Activated T-helper 2 cell treated with anti-CD3 and anti-CD28 coated beads, Interferon-gamma antibody, Interleukin-2, Interleukin-4, amounts not matched to agents 10 μg/mL and 5 μg/mL and 100 μg/mL, durations not matched to agents 14 hours and 24 hours and 36 hours (primary cell): ENCODE measurements at regions of chr18 and their contacts with region 1.

Region 1: GRCh38 chr18:7066965-7067555 is 50.5 kb downstream of the LAMA1 start:
- DNase-seq: no peak
- H3K4me3 Mint-ChIP-seq: no peak overlapping the region
- H3K27ac Mint-ChIP-seq: no peak overlapping the region
- H3K4me1 Mint-ChIP-seq: no peaks in the 10 kb centered on the region
- H3K27me3 Mint-ChIP-seq: no peaks in the 10 kb centered on the region

Region 2: DNA sequence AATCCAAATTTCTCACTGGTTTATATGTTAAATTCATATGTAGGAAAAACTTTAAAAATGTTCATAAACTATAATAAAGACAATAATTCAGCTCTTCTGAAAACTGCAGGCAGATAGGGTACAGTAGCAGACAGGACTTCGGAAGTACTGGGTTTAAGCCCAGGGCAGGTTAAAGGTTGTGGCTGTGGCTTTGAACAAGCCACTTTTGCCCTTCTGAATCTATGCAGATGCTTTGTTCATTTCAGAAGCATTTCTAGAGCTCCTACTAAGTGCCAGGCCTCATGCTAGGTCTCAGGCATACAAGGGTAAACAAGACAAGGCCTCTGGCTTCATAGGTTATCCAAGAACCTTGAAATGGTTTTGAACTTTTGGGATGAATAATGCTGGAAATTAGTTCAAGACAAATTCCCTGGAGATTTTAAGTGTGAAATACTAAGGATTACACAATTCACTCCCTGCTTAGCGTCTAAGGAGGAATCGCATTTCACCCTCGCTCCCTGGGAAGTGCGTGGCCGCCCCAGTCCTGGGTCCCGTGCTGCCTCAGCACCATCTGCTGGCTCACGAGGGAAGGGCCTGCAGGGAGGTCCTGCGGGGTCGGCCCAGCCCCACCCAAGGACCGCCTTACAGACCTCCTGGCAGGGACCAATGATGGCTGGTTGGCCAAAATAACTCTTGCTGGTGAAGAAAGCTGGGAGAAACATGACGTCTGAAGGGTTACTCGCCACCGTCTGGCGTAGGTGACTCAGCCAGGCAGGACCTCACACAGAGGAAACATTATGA is 584.7 kb before region 1 on chr18:
- intact Hi-C with region 1: loop called (anchors 5 kb)
- DNase-seq: no peak
- H3K4me3 Mint-ChIP-seq: no peak overlapping the region
- H3K27ac Mint-ChIP-seq: no peak overlapping the region
- H3K4me1 Mint-ChIP-seq: no peaks in the 10 kb centered on the region
- H3K27me3 Mint-ChIP-seq: no peaks in the 10 kb centered on the region

Region 3: GRCh38 chr18:7358989-7359726 is 292.1 kb after region 1 on chr18:
- intact Hi-C with region 1: no loop called
- DNase-seq: no peak
- H3K4me3 Mint-ChIP-seq: no peak overlapping the region
- H3K27ac Mint-ChIP-seq: no peak overlapping the region
- H3K4me1 Mint-ChIP-seq: no peaks in the 10 kb centered on the region
- H3K27me3 Mint-ChIP-seq: no peaks in the 10 kb centered on the region